ENCODE measurements at regions of chr12 and their contacts with region 1.

Region 1: GRCh38 chr12:132167611-132168310 is 23.5 kb downstream of the NOC4L start:
- DNase-seq: peak in 1 of 10 donors; percentile 39
- H3K4me3 ChIP-seq: no peak overlapping the region
- H3K27ac ChIP-seq: no peak overlapping the region
- H3K27me3 ChIP-seq: peaks cover 0 to 32% (median 5%) of the 10 kb centered on the region in 45 donors
- CTCF ChIP-seq: no peak

Region 2: GRCh38 chr12:132373901-132374611 is 206.3 kb after region 1 on chr12:
- intact Hi-C with region 1: loop called in 1 of 2 experiments (anchors 5 kb)
- DNase-seq: peak in 3 of 10 donors; percentile 23 to 55 (median 27)
- H3K4me3 ChIP-seq: no peak overlapping the region
- H3K27ac ChIP-seq: no peak overlapping the region
- H3K27me3 ChIP-seq: peaks cover 0 to 77% (median 47%) of the 10 kb centered on the region in 45 donors
- CTCF ChIP-seq: peak in 1 of 56 donors; percentile 21